Naive thymus-derived CD4-positive, alpha-beta T cell (primary cell): ENCODE measurements at regions of chr1 and their contacts with region 1.

Region 1: GRCh38 chr1:52552505-52553361 is at the start of gene TUT4:
- DNase-seq: peak; percentile 57 to 77 (median 73)
- ATAC-seq: peak; percentile 57
- H3K4me3 ChIP-seq: peak within 1 kb of the TSS; percentile 95
- H3K4me3 Mint-ChIP-seq: peak within 1 kb of the TSS in 8 of 10 donors; percentile 67 to 88 (median 75)
- H3K27ac ChIP-seq: peak within 1 kb of the TSS; percentile 91
- H3K27ac Mint-ChIP-seq: peak within 1 kb of the TSS in 7 of 9 donors; percentile 55 to 94 (median 87)
- H3K4me1 ChIP-seq: peaks cover 0 to 40% of the 10 kb centered on the region in 2 donors
- H3K4me1 Mint-ChIP-seq: peaks cover 23 to 52% (median 43%) of the 10 kb centered on the region in 7 donors
- H3K27me3 ChIP-seq: no peaks in the 10 kb centered on the region
- H3K27me3 Mint-ChIP-seq: peaks cover 0 to 7% (median 0%) of the 10 kb centered on the region in 5 donors
- total RNA-seq, gene TUT4: 80.4 to 169 (median 139) TPM

Region 2: DNA sequence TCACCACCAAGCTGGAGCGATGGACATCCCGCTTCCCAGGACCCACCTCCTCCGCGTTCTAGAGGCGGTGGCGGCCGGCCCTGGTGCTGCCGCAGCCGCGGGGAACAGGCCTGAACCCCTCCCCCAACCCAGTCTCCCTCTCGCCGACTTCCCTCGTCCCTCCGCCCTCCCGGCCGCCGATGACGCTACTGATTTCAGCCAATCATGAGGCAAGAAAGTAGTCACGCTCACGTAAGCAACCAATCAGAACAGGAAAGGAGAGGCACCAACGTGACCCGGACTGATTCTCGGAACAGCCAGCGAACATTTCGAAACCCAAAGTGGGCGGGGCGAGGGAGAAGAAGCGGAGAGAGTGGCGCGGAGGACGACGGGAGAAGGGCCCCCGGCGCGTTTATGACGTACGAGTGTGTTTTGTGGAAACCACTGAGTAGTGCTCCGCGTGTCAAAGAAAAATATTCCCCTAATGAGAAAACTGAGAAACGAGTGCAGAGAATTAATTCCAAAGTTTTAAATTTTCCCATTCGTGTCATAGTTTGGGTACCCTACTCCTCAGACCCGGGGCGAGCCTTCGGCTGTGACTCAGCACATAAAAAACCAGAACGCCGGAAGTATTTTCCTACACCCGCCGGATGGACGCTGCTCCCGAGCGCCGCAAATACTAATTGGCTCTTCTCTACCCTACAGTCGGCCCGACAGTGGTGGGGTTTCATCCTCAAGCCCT is 674.0 kb before region 1 on chr1 and contains the start of gene NRDC:
- CTCF ChIA-PET with region 1: no interaction called
- POLR2A ChIA-PET with region 1: no interaction called
- intact Hi-C with region 1: loop called (anchors 2 kb)
- DNase-seq: peak; percentile 95 to 100 (median 99)
- ATAC-seq: peak; percentile 95
- H3K4me3 ChIP-seq: peak within 1 kb of the TSS; percentile 87
- H3K4me3 Mint-ChIP-seq: no peak within 1 kb of the TSS
- H3K27ac ChIP-seq: peak within 1 kb of the TSS; percentile 98
- H3K27ac Mint-ChIP-seq: no peak within 1 kb of the TSS
- H3K4me1 ChIP-seq: peaks cover 16 to 26% of the 10 kb centered on the region in 2 donors
- H3K4me1 Mint-ChIP-seq: peaks cover 0 to 30% (median 17%) of the 10 kb centered on the region in 7 donors
- H3K27me3 ChIP-seq: no peaks in the 10 kb centered on the region
- H3K27me3 Mint-ChIP-seq: peaks cover 7 to 15% (median 10%) of the 10 kb centered on the region in 5 donors
- total RNA-seq, gene NRDC: 93.1 to 194 (median 122) TPM

Region 3: GRCh38 chr1:52424231-52424636 is 128.5 kb before region 1 on chr1:
- CTCF ChIA-PET with region 1: no interaction called
- POLR2A ChIA-PET with region 1: interaction called, 6 read pairs
- intact Hi-C with region 1: loop called (anchors 1 to 2 kb)
- DNase-seq: peak in 7 of 9 donors; percentile 38 to 71 (median 57)
- ATAC-seq: peak; percentile 93
- H3K4me3 ChIP-seq: peak overlapping the region; percentile 14
- H3K4me3 Mint-ChIP-seq: peak overlapping the region; percentile 49 to 81 (median 74)
- H3K27ac ChIP-seq: peak overlapping the region; percentile 63
- H3K27ac Mint-ChIP-seq: peak overlapping the region; percentile 85 to 96 (median 91)
- H3K4me1 ChIP-seq: peaks cover 35 to 45% of the 10 kb centered on the region in 2 donors
- H3K4me1 Mint-ChIP-seq: peaks cover 33 to 72% (median 51%) of the 10 kb centered on the region in 7 donors
- H3K27me3 ChIP-seq: no peaks in the 10 kb centered on the region
- H3K27me3 Mint-ChIP-seq: no peaks in the 10 kb centered on the region

Region 4: DNA sequence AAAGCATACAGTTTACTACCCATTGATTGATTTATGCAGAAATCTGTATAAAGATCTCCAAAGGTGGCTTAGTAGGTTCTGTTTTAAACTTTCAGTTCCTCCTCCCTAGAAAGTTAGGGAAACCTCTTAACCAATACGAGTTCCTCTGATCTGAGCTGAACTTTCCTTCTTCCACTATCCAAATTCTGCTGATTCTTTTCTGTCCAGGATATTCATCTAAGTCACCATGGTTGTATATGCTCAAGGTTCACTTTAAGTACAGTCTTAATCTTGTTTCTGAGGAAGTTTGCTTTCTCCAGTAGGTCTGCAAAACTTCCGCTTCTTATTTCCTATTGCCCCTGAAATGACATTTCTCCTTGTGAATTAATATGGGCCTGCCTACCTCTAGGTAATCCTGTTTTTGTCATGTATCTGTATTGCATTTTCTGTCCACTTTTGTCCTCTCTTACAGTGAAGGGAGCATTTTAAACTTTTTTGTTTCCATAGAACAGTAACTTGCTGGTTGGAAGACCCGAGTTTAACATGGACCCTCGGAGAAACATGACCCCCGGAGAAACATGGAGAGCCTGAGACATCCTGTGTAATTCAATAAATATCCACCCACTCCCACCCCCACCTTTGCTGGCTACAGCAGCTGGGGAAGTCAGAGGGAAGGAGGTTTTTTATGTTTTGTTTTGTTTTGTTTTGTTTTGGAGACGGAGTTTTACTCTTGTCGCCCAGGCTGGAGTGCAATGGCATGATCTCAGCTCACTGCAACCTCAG is 16.9 kb after region 1 on chr1:
- CTCF ChIA-PET with region 1: interaction called, 4 read pairs
- POLR2A ChIA-PET with region 1: interaction called, 19 read pairs
- intact Hi-C with region 1: loop called in 1 of 2 experiments (anchors 1 kb)
- DNase-seq: no peak
- ATAC-seq: peak; percentile 29
- H3K4me3 ChIP-seq: no peak overlapping the region
- H3K4me3 Mint-ChIP-seq: peak overlapping the region in 9 of 10 donors; percentile 2 to 65 (median 35)
- H3K27ac ChIP-seq: no peak overlapping the region
- H3K27ac Mint-ChIP-seq: peak overlapping the region in 8 of 9 donors; percentile 26 to 75 (median 59)
- H3K4me1 ChIP-seq: peaks cover 0 to 5% of the 10 kb centered on the region in 2 donors
- H3K4me1 Mint-ChIP-seq: peaks cover 11 to 34% (median 19%) of the 10 kb centered on the region in 7 donors
- H3K27me3 ChIP-seq: no peaks in the 10 kb centered on the region
- H3K27me3 Mint-ChIP-seq: peaks cover 0 to 9% (median 0%) of the 10 kb centered on the region in 5 donors

Region 5: DNA sequence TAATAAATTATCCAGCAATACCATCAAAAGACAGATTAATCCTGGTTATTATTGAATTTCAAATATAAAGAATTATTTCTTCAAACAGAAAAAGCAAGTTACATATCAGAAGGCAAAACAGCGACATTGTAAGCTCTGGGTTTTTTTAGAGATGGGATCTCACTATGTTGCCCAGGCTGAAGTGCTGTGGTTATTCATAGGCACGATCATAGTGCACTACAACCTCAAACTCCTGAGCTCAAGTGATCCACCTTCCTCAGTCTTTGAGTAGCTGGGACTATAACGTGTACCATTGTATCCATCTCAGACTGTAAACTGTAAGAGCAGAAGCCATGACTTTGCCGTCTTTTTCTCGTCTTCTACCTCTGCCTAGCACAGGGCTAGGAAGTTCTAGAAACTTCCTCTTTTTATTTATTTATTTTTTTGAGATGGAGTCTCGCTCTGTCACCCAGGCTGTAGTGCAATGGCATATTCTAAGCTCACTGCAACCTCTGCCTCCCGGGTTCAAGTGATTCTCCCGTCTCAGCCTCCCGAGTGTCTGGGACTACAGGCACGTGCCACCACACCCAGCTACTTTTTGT is 29.5 kb after region 1 on chr1:
- CTCF ChIA-PET with region 1: no interaction called
- POLR2A ChIA-PET with region 1: no interaction called
- intact Hi-C with region 1: no loop called
- DNase-seq: no peak
- ATAC-seq: no peak
- H3K4me3 ChIP-seq: no peak overlapping the region
- H3K4me3 Mint-ChIP-seq: no peak overlapping the region
- H3K27ac ChIP-seq: no peak overlapping the region
- H3K27ac Mint-ChIP-seq: no peak overlapping the region
- H3K4me1 ChIP-seq: no peaks in the 10 kb centered on the region
- H3K4me1 Mint-ChIP-seq: peaks cover 5 to 11% (median 9%) of the 10 kb centered on the region in 7 donors
- H3K27me3 ChIP-seq: no peaks in the 10 kb centered on the region
- H3K27me3 Mint-ChIP-seq: peaks cover 0 to 21% (median 0%) of the 10 kb centered on the region in 5 donors

Region 6: GRCh38 chr1:52667290-52667689 is 114.6 kb after region 1 on chr1:
- CTCF ChIA-PET with region 1: interaction called, 4 read pairs
- POLR2A ChIA-PET with region 1: interaction called, 6 read pairs
- intact Hi-C with region 1: loop called in 1 of 2 experiments (anchors 2 kb)
- DNase-seq: no peak
- ATAC-seq: no peak
- H3K4me3 ChIP-seq: no peak overlapping the region
- H3K4me3 Mint-ChIP-seq: no peak overlapping the region
- H3K27ac ChIP-seq: no peak overlapping the region
- H3K27ac Mint-ChIP-seq: peak overlapping the region in 4 of 9 donors; percentile 26 to 67 (median 46)
- H3K4me1 ChIP-seq: no peaks in the 10 kb centered on the region
- H3K4me1 Mint-ChIP-seq: peaks cover 0 to 22% (median 10%) of the 10 kb centered on the region in 7 donors
- H3K27me3 ChIP-seq: no peaks in the 10 kb centered on the region
- H3K27me3 Mint-ChIP-seq: no peaks in the 10 kb centered on the region

Region 7: GRCh38 chr1:52792036-52792435 is 239.3 kb after region 1 on chr1:
- CTCF ChIA-PET with region 1: no interaction called
- POLR2A ChIA-PET with region 1: no interaction called
- intact Hi-C with region 1: no loop called
- DNase-seq: no peak
- ATAC-seq: no peak
- H3K4me3 ChIP-seq: no peak overlapping the region
- H3K4me3 Mint-ChIP-seq: no peak overlapping the region
- H3K27ac ChIP-seq: no peak overlapping the region
- H3K27ac Mint-ChIP-seq: peak overlapping the region in 1 of 9 donors; percentile 4
- H3K4me1 ChIP-seq: no peaks in the 10 kb centered on the region
- H3K4me1 Mint-ChIP-seq: peaks cover 0 to 3% (median 0%) of the 10 kb centered on the region in 7 donors
- H3K27me3 ChIP-seq: no peaks in the 10 kb centered on the region
- H3K27me3 Mint-ChIP-seq: no peaks in the 10 kb centered on the region

Region 8: GRCh38 chr1:52920791-52921291 is 368.1 kb after region 1 on chr1:
- CTCF ChIA-PET with region 1: no interaction called
- POLR2A ChIA-PET with region 1: no interaction called
- intact Hi-C with region 1: loop called (anchors 2 to 5 kb)
- DNase-seq: no peak
- ATAC-seq: no peak
- H3K4me3 ChIP-seq: peak overlapping the region; percentile 67
- H3K4me3 Mint-ChIP-seq: peak overlapping the region; percentile 65 to 89 (median 84)
- H3K27ac ChIP-seq: peak overlapping the region; percentile 74
- H3K27ac Mint-ChIP-seq: peak overlapping the region; percentile 51 to 86 (median 70)
- H3K4me1 ChIP-seq: peaks cover 0 to 12% of the 10 kb centered on the region in 2 donors
- H3K4me1 Mint-ChIP-seq: peaks cover 16 to 41% (median 31%) of the 10 kb centered on the region in 7 donors
- H3K27me3 ChIP-seq: no peaks in the 10 kb centered on the region
- H3K27me3 Mint-ChIP-seq: peaks cover 0 to 4% (median 0%) of the 10 kb centered on the region in 5 donors

Region 9: DNA sequence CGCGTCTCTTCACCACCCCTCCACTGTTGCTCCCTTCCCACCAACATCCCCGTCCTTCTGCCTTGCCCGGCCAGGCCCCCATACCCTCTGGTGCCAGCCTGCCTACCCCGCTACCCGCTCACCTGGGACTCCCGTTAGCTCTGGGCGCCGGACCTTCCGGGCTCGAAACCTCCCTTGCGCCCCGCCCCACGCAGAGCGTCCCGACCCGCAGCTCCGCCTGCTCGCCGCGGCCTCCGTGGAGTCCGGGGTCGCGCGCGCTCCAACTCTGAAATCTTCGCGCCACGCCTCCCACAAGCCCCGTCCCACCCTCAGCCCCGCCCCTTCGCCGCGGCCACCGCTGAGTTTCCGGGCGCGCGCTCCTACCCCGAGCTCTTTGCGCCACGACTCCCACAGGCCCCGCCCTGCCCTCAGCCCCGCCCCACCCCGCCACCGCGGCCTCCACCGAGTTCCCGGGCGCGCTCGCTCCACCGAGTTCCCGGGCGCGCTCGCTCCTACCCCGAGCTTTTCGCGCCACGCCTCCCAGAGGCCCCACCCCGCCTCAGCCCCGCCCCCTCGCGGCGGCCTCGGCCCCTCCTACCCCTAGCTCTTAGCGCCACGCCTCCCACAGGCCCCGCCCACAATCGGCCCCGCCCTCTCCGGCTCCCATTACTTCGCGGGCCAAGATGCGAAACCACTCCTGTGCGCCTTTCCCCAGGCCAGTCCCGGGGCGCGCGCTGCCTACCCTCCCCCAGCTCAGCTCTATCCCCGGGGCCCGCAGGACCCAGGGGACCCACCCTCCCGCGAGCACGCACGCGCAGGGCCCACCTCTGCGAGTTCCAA is 1392.9 kb after region 1 on chr1 and contains the start of gene IFT25:
- CTCF ChIA-PET with region 1: no interaction called
- POLR2A ChIA-PET with region 1: no interaction called
- intact Hi-C with region 1: loop called in 1 of 2 experiments (anchors 10 kb)
- DNase-seq: peak; percentile 96 to 100 (median 99)
- ATAC-seq: peak; percentile 92
- H3K4me3 ChIP-seq: peak within 1 kb of the TSS; percentile 70
- H3K4me3 Mint-ChIP-seq: peak within 1 kb of the TSS; percentile 91 to 97 (median 96)
- H3K27ac ChIP-seq: peak within 1 kb of the TSS; percentile 83
- H3K27ac Mint-ChIP-seq: peak within 1 kb of the TSS; percentile 83 to 96 (median 93)
- H3K4me1 ChIP-seq: peaks cover 17 to 30% of the 10 kb centered on the region in 2 donors
- H3K4me1 Mint-ChIP-seq: peaks cover 33 to 64% (median 56%) of the 10 kb centered on the region in 7 donors
- H3K27me3 ChIP-seq: no peaks in the 10 kb centered on the region
- H3K27me3 Mint-ChIP-seq: no peaks in the 10 kb centered on the region
- total RNA-seq, gene IFT25: 17.5 to 59.9 (median 41.3) TPM